ENCODE measurements at regions of chr2 and their contacts with region 1.

Region 1: DNA sequence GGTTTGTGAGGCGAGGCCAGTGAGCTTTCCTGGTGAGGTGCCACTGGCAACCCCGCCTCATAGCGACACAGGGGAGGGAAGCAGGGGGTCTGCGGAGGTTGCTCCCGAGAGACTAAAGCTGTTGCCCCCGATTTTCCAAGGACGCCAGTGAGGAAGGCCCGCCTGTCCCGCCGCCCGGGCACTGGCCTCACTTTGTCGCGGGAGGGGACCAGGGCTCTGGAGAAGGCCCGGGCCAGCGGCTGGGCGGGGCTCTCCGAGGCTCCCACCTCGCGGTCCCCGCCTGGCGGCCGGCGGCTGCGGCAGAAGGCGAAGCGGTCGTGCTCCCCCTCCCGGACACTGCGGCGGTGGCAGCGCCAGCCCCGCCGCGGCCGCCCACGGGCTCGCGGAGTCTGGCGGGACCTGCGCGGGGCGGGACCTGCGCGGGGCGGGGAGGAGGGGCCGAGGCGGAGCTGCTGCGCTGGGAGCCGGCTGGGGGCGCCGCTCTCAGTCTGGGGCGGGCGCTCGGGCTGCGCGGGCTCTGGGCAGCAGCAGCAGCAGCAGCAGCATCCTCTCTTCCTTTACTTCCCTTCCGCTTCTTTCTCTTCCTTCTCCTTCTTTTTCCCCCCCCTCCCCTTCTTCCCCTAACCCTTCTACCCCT is at the start of gene MAP2:
- DNase-seq: peak; percentile 58 to 71 (median 64)
- ATAC-seq: peak; percentile 100
- H3K4me3 ChIP-seq: peak within 1 kb of the TSS; percentile 30
- H3K27ac ChIP-seq: no peak within 1 kb of the TSS
- H3K4me1 ChIP-seq: peaks cover 0 to 11% of the 10 kb centered on the region in 2 experiments; a peak in 2 of 5 replicates
- H3K27me3 ChIP-seq: no peaks in the 10 kb centered on the region
- CTCF ChIP-seq: peak; percentile 38 to 99 (median 91); a peak in 5 of 6 replicates
- EP300 ChIP-seq: no peak
- POLR2A ChIP-seq: no peak
- RAD21 ChIP-seq: peak in 1 of 2 experiments; percentile 56; a peak in 3 of 4 replicates
- polyA plus RNA-seq, gene MAP2: not detected

Region 2: GRCh38 chr2:208407667-208408066 is 1016.0 kb before region 1 on chr2:
- CTCF ChIA-PET with region 1: no interaction called
- POLR2A ChIA-PET with region 1: no interaction called
- in situ Hi-C with region 1: no loop called
- intact Hi-C with region 1: loop called (anchors 10 kb)
- DNase-seq: peak; percentile 27 to 34 (median 32)
- ATAC-seq: peak; percentile 86
- H3K4me3 ChIP-seq: no peak overlapping the region
- H3K27ac ChIP-seq: no peak overlapping the region
- H3K4me1 ChIP-seq: peaks cover 0 to 9% of the 10 kb centered on the region in 2 experiments; a peak in 2 of 5 replicates
- H3K27me3 ChIP-seq: peaks cover 2 to 12% of the 10 kb centered on the region in 2 experiments; a peak in 3 of 5 replicates
- CTCF ChIP-seq: peak; percentile 48 to 75 (median 52); a peak in 4 of 6 replicates
- EP300 ChIP-seq: no peak
- POLR2A ChIP-seq: no peak
- RAD21 ChIP-seq: peak; percentile 78 to 81

Region 3: DNA sequence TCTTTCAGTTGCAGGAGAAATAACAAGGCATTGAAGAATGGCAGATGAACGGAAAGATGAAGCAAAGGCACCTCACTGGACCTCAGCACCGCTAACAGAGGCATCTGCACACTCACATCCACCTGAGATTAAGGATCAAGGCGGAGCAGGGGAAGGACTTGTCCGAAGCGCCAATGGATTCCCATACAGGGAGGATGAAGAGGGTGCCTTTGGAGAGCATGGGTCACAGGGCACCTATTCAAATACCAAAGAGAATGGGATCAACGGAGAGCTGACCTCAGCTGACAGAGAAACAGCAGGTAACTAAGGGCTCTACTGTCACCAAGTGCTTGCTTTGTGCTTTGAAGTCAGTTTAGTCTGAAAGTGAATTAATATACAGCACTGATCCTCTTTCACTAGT is 229.5 kb after region 1 on chr2:
- CTCF ChIA-PET with region 1: no interaction called
- POLR2A ChIA-PET with region 1: no interaction called
- in situ Hi-C with region 1: no loop called
- intact Hi-C with region 1: no loop called
- DNase-seq: no peak
- ATAC-seq: no peak
- H3K4me3 ChIP-seq: no peak overlapping the region
- H3K27ac ChIP-seq: no peak overlapping the region
- H3K4me1 ChIP-seq: no peaks in the 10 kb centered on the region
- H3K27me3 ChIP-seq: no peaks in the 10 kb centered on the region
- CTCF ChIP-seq: no peak
- EP300 ChIP-seq: no peak
- POLR2A ChIP-seq: no peak
- RAD21 ChIP-seq: no peak

Measured in K562 (cell line).